ENCODE measurements at regions of chr9 and their contacts with region 1.

Region 1: GRCh38 chr9:5817869-5818268 is 15.0 kb downstream of the ERMP1 start:
- DNase-seq: no peak
- ATAC-seq: no peak
- H3K4me3 ChIP-seq: no peak overlapping the region
- H3K27ac ChIP-seq: no peak overlapping the region
- H3K4me1 ChIP-seq: no peaks in the 10 kb centered on the region
- H3K27me3 ChIP-seq: no peaks in the 10 kb centered on the region
- CTCF ChIP-seq: no peak

Region 2: DNA sequence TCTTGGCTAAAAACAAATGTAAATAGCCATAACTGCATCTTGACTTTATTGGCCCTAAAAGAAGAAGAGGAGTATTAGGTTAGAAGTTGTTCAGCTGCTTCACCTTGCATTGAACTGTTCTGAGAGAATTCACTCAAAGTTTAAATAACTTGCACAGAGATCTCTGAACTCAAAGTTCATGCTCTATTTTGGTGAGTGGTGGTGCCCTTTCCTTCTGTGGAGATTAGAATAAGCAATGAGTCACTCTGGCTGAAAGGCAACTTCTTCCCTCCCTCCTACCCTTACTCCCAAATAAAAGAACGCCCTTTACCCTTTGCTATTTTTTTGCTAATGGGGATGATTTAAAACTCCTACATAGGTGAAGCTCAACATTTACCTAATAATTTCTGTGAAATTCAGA is 33.9 kb before region 1 on chr9:
- intact Hi-C with region 1: loop called in 1 of 10 experiments (anchors 1 kb)
- DNase-seq: no peak
- ATAC-seq: peak in 6 of 8 donors; percentile 39 to 66 (median 58)
- H3K4me3 ChIP-seq: no peak overlapping the region
- H3K27ac ChIP-seq: peak overlapping the region in 1 of 10 donors; percentile 15
- H3K4me1 ChIP-seq: peaks cover 0 to 24% (median 6%) of the 10 kb centered on the region in 9 donors
- H3K27me3 ChIP-seq: no peaks in the 10 kb centered on the region
- CTCF ChIP-seq: no peak

Measured in heart right ventricle (tissue), 16 donors.